ENCODE measurements at regions of chr9 and their contacts with region 1.

Region 1: DNA sequence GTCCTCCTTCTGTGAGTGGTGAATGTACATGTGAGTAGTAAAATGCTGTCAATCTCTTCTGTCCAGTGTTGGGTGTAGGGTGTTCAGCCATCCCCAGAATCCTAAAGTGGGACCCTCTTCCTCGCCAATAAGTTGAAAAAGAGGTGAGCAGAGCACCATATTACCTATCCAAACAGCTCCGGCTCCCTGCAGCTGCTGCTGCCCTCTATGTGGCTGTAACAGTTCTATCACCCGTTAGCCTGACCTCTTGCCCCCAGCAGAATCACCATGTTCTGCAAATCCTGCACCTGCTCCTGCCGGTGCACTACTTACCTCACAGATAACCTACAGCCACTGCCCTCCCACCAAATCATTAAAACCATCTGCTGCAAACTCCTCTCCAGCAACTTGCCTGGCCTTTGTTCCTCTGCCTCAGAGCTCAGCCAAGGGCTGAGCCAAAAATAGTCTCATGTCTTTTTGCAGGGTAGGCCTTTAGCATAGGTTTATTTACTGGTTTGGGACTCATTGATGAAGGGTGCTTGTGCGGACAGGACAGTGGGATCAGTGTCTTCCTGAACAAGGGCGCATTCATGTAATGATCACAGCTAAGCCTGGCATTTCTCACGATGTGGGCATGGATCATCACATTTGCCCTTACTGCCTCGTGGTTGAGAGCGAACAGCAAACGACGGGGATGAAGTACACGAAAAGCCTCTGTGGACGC is 49.6 kb upstream of the CCL21 start:
- DNase-seq: no peak
- H3K4me3 ChIP-seq: no peak overlapping the region
- H3K27ac ChIP-seq: no peak overlapping the region
- H3K4me1 ChIP-seq: no peaks in the 10 kb centered on the region
- H3K27me3 ChIP-seq: no peaks in the 10 kb centered on the region
- CTCF ChIP-seq: no peak
- EP300 ChIP-seq: no peak
- POLR2A ChIP-seq: no peak
- RAD21 ChIP-seq: no peak

Region 2: GRCh38 chr9:34701769-34702736 is 57.5 kb before region 1 on chr9:
- CTCF ChIA-PET with region 1: interaction called, 21 read pairs
- POLR2A ChIA-PET with region 1: no interaction called
- DNase-seq: peak; percentile 21 to 92
- H3K4me3 ChIP-seq: peak overlapping the region; percentile 38 to 65 (median 45)
- H3K27ac ChIP-seq: no peak overlapping the region
- H3K4me1 ChIP-seq: peaks cover 0 to 5% (median 2%) of the 10 kb centered on the region in 4 experiments; a peak in 2 of 7 replicates
- H3K27me3 ChIP-seq: peaks cover 0 to 30% (median 18%) of the 10 kb centered on the region in 4 experiments; a peak in 6 of 7 replicates
- CTCF ChIP-seq: peak; percentile 97 to 98 (median 98)
- EP300 ChIP-seq: no peak
- POLR2A ChIP-seq: no peak
- RAD21 ChIP-seq: peak; percentile 77 to 81

Region 3: GRCh38 chr9:34869390-34869789 is 109.8 kb after region 1 on chr9:
- CTCF ChIA-PET with region 1: interaction called, 80 read pairs
- POLR2A ChIA-PET with region 1: no interaction called
- DNase-seq: no peak
- H3K4me3 ChIP-seq: no peak overlapping the region
- H3K27ac ChIP-seq: no peak overlapping the region
- H3K4me1 ChIP-seq: no peaks in the 10 kb centered on the region
- H3K27me3 ChIP-seq: no peaks in the 10 kb centered on the region
- CTCF ChIP-seq: peak in 2 of 3 experiments; percentile 40 to 47; a peak in 2 of 4 replicates
- EP300 ChIP-seq: no peak
- POLR2A ChIP-seq: no peak
- RAD21 ChIP-seq: peak; percentile 62 to 68

Region 4: DNA sequence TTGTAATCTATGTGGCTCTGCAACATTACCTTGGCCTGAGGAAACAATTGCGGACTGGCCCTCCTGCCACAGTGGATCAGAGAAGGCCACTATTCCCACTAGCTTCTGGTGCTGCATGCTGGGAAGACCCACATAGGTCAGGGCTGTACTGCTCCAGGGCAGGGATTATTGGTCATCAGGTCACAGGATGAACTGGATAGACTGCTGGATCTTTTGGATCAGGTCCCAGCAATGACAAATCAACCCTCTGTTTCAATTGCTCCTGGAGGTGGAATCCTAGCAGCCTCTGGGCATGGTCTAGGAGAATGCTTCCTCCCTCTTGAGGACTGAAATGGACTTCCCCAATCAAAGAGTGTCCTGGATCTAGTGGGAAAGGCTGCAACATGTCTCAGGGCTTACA is 131.8 kb after region 1 on chr9:
- CTCF ChIA-PET with region 1: interaction called, 63 read pairs
- POLR2A ChIA-PET with region 1: no interaction called
- DNase-seq: no peak
- H3K4me3 ChIP-seq: no peak overlapping the region
- H3K27ac ChIP-seq: no peak overlapping the region
- H3K4me1 ChIP-seq: no peaks in the 10 kb centered on the region
- H3K27me3 ChIP-seq: no peaks in the 10 kb centered on the region; a peak in 1 of 7 replicates
- CTCF ChIP-seq: no peak
- EP300 ChIP-seq: no peak
- POLR2A ChIP-seq: no peak
- RAD21 ChIP-seq: no peak

Measured in H1 (cell line).